Cardiac septum (tissue), 1 donor: ENCODE measurements at regions of chr11 and their contacts with region 1.

Region 1: DNA sequence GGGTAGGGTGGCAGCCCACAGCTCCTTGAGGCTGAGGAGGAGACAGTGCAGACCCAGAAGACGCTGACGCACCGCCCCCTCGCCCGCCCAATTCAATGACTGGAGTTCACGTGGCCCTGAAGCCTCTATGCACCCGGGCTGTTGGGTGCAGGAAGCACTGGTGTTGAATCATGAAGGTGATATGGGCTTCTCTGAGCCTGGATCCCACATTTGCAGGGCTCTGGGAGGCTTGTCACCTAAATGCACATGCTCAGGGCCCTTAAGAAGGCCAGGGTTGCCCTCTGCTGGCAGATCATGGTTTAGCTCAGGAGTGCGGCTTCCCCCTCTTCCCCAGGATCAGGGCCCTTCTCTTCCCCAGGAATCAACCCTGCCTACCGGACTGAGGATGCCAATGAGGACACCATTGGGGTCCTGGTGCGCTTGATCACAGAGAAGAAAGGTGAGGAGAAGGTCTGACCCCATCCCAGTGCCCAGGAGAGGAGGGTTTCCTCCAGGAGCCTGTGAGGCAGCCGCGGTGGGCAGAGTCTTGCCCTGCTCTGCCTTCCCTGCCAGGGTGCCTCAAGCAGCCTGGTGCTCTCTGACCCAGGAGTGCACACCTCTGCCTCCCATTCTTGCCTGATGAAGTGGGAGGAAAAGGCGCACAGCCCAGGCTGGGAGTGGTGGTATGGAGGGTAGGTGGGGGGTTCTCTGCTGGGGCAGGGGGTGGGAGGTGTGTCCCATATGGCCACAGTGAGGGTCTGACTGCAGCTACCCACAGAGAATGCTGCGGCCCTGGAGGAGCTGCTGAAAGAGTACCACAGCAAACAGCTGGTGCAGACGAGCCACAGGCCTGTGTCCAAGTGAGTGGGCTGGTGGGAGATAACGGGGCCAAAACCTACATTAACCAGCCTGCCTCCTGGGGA is 17.5 kb downstream of the RELT start:
- DNase-seq: peak; percentile 85

Region 2: DNA sequence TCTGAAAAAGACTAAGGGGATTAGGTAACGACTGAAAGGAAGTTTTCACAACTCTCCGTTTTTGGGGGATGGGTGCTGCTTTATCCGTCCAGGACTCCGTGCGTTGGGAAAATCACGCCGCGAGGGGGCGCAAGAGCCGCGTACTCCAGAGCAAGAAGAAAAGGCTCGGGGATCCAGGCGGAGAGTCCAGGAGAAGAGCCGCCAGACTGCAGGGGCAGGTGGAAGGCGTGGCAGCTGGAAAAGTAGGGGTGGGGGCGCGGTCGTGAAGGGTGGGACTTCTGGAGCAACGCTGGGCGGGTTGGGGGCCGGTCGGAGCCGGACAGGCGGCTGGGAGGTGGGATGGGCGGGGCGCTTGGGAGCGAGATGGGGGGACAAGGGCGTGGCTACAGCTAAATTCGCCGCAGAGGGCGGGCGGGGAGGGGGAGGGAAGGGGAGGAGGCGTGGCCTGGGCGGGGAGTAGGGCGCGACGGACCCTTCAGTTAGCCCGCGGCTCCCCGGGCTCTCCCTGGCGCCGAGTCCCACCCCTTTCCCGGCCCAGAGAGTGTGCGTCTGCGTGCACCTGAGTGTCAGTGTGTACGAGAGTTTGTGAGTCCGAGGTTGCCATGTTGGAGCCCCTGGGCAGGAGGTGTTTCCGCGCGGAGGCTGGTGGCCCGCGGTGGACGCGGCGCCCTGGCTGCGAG is 86.3 kb before region 1 on chr11:
- intact Hi-C with region 1: loop called (anchors 2 kb)
- DNase-seq: peak; percentile 98

Region 3: DNA sequence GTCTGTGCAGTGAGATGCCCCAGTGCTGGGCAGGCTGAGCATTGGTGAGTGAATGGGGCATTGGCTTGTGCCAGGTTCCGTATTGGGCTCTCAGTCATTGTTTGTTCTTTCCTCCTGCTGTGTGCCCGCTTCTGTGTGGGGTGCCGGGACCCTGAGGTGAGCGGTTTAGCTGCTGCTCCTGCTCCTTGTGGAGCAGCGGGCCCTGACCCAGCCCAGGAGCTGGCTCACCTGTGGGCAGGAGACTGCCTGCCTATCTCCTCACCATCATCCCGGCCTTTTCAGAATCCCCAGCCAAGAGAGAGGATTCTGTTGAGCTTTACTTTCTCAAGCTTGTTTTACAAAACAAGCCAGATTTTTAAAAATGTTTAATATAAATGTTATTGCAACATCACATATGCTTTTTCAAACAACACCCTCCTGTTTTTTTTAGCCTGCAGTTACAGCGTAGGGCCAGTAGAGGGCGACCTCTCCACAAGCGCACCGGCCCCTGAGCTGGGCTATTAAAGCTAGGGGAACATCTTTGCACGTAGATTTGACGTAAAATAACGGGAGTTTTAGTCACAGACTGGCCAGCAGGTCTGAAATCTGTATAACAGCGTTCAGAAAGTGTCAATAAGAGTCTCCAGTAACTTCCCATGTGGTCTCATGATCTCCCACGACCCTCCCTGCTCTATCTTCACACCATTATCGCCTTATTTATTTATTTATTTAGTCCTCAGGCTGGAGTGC is 42.7 kb before region 1 on chr11:
- intact Hi-C with region 1: loop called (anchors 2 kb)
- DNase-seq: no peak